MCF 10A (cell line): ENCODE measurements at regions of chr3 and their contacts with region 1.

Region 1: DNA sequence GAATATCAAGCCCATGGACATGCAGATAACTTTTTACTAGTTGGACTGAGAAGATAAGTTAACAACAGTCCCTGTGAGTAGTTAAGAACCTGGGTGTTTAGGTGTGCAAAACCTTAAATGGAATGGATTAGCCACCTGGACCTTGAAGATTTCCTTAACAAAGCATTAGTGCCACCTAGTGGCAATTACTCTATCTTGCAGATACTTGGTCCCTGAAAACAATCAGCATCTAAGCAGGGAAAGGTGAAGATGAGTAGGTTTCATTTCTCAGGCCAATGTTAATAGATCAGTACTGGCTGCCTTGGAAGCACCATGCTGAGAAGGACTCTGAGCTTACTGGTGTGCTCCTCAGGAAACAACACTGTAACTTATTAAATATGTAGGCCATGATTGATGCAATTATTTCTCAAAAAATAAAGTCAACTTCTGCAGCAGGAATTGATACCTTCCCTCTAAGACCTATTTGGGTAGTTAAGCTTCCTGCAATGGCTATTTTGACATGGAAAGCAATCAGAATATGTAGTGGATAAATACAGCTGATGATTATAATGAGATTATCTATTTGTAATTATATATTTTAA is 329.4 kb downstream of the TBC1D5 start:
- DNase-seq: peak; percentile 66
- H3K4me3 Mint-ChIP-seq: no peak overlapping the region
- H3K27ac Mint-ChIP-seq: no peak overlapping the region
- H3K4me1 Mint-ChIP-seq: no peaks in the 10 kb centered on the region
- H3K27me3 Mint-ChIP-seq: no peaks in the 10 kb centered on the region
- CTCF ChIP-seq: peak; percentile 67

Region 2: DNA sequence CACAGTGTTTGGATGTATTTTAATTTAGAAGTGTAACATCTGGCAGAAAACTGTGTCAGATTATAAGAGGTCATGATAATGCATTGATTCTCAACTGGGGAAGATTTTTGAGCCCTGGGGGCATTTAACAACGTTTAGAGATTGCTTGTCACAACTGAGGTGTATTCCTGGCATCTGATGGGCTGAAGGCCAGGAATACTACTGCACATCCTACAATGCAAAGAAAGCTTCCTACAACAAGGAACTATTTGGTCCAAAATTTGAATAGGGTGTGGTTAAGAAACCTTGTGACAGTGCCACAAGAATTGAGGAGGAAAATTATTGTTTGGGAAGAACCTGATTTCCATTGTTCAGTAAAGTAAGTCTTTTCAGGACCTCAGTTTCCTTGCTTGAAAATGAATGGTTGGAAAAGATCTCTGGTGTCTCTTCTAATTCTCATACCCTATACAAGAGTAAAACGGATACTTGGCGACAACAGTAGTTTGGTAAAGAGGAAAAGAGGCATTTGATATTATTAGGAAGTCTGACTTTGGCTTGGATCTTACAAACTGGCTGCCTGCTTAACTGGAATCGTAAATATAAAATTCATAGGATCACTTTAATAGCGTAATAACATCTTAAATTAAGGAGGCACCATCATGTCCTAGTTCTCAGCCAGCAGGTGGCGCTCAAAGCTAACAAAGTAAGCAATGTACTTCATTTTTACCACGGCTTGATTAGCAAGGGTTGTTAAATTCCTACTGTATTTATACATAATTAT is 812.1 kb before region 1 on chr3:
- CTCF ChIA-PET with region 1: interaction called, 10 read pairs
- POLR2A ChIA-PET with region 1: no interaction called
- intact Hi-C with region 1: loop called (anchors 2 kb)
- DNase-seq: peak; percentile 80
- H3K4me3 Mint-ChIP-seq: no peak overlapping the region
- H3K27ac Mint-ChIP-seq: no peak overlapping the region
- H3K4me1 Mint-ChIP-seq: no peaks in the 10 kb centered on the region
- H3K27me3 Mint-ChIP-seq: peaks cover 54% of the 10 kb centered on the region
- CTCF ChIP-seq: peak; percentile 69

Region 3: DNA sequence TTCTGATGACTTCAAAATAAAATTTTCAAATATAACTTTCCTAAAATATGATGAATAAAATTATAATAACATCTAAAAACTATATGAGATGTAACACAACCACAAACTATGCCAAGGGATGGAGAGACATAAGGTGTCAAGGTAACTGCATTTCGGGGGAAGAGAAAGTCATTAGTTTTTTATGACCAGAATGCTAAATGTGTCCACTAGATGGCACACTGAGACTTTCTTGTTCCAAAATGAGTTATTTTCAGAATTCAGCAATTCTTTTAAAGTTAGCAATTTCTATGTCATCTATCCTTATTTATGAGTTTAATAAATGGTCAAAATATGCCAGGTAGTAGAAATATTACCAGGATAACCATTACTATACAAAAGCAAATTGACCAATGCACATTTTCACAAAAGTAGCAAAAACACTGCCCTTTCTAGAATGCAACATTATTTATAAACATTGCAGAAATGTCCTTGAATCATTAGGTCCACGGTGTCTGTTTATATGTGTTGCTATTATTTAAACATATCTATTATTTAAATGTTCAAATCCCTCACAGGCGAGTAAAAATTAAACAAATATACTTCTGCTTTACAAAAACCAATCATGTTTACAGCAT is 154.1 kb before region 1 on chr3:
- CTCF ChIA-PET with region 1: interaction called, 13 read pairs
- POLR2A ChIA-PET with region 1: no interaction called
- intact Hi-C with region 1: loop called (anchors 1 kb)
- DNase-seq: peak; percentile 55
- H3K4me3 Mint-ChIP-seq: no peak overlapping the region
- H3K27ac Mint-ChIP-seq: no peak overlapping the region
- H3K4me1 Mint-ChIP-seq: no peaks in the 10 kb centered on the region
- H3K27me3 Mint-ChIP-seq: no peaks in the 10 kb centered on the region
- CTCF ChIP-seq: peak; percentile 51

Region 4: DNA sequence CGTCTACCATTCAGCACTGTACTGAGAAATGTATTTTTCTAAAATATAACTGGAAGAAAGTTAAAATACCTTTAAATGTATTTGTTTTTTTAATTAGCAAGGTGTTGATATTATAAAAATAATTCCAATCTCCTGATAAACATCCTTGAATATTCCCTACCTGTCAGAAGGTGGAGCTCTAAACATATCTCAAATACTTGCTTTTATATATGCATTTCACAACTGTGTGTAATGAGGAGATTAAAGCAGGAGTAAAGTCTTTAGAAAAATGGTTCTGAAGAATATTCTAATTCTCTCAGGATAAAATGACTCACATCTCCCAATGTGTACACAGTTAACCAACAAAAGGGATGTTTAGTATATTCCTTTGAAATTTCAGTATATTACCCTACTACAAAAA is 105.6 kb before region 1 on chr3:
- CTCF ChIA-PET with region 1: interaction called, 5 read pairs
- POLR2A ChIA-PET with region 1: interaction called, 3 read pairs
- intact Hi-C with region 1: loop called (anchors 2 kb)
- DNase-seq: peak; percentile 9
- H3K4me3 Mint-ChIP-seq: no peak overlapping the region
- H3K27ac Mint-ChIP-seq: no peak overlapping the region
- H3K4me1 Mint-ChIP-seq: no peaks in the 10 kb centered on the region
- H3K27me3 Mint-ChIP-seq: no peaks in the 10 kb centered on the region
- CTCF ChIP-seq: no peak

Region 5: DNA sequence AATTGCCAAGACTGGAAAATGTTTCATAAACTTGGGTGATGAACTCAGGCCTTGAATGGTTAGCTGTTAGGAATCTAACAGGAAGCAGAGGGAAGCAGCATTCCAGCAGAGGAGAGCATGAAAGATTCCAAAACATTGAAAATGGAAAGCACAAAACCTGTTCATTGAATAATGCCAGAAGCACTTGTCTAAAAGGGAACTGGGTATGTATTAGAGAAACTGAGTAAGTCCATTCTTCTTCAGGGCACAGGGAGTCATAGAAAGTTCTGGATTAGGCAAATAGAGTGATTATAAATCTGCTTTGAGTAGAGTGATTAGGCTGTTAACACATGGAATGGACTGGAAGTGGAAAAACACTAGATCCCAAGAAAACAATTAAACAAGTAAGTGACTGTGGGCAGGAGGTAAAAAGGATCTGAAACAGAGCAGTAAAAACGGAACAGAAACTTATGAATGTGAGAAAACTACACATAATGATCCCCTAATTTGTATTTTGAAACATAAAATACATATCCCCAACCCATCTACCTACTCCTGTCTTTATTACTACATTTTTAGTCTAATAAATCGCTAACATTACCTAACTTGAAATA is 14.0 kb before region 1 on chr3:
- CTCF ChIA-PET with region 1: interaction called, 13 read pairs
- POLR2A ChIA-PET with region 1: interaction called, 5 read pairs
- intact Hi-C with region 1: no loop called
- DNase-seq: no peak
- H3K4me3 Mint-ChIP-seq: no peak overlapping the region
- H3K27ac Mint-ChIP-seq: no peak overlapping the region
- H3K4me1 Mint-ChIP-seq: no peaks in the 10 kb centered on the region
- H3K27me3 Mint-ChIP-seq: no peaks in the 10 kb centered on the region
- CTCF ChIP-seq: no peak

Region 6: DNA sequence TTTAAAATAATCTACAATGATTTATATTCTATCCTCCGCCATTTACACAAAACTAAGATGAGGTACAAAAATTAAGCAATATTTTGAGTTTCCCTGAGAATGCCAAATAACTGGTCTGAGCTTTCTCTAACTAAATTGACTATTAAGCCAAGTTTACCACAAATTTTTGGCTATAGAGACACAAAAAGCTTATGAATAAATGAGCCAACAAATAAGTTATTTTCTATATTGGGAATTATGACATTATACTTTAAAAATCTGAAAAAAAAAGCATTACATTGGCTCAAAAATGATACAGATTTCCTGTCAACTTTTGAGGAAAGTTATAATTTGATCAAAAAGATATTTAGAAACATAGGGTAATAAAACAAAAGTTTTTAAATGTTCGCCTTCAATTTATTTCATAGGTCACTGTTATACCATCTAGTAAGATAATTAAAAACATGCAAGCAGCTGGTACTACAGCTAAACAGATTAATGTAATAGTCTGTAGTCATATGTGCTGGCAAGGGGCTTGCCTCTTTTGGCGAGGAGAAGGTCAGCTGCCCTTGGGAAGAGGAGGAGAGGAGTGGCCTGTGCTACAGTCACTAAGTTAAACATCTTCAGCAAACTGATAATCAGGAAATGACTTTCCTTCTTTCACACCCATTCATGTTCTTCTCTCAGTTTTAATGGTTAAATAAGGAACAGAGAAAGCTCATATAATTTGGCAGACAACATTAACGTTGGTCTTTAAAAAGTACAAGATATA is 10.9 kb after region 1 on chr3:
- CTCF ChIA-PET with region 1: interaction called, 28 read pairs
- POLR2A ChIA-PET with region 1: no interaction called
- intact Hi-C with region 1: no loop called
- DNase-seq: no peak
- H3K4me3 Mint-ChIP-seq: no peak overlapping the region
- H3K27ac Mint-ChIP-seq: no peak overlapping the region
- H3K4me1 Mint-ChIP-seq: no peaks in the 10 kb centered on the region
- H3K27me3 Mint-ChIP-seq: no peaks in the 10 kb centered on the region
- CTCF ChIP-seq: no peak

Region 7: DNA sequence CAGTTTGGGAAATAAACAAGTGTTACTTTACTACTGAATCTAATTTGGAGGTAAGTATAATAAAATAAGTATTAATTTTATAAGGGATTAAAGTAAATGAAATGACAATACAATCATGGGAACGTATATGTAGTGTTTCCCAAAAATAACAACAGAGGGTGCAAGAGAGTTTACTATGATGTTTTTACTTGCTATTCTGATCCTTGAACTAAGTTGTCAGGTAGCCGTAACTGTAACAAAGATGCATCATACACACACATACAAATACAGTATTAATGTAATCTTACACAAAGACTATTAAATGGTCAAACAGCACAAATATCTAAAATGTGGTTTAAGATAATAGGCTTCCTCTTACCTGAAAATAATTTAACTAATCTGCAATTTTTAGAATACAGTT is 18.0 kb after region 1 on chr3:
- CTCF ChIA-PET with region 1: interaction called, 19 read pairs
- POLR2A ChIA-PET with region 1: no interaction called
- intact Hi-C with region 1: no loop called
- DNase-seq: peak; percentile 54
- H3K4me3 Mint-ChIP-seq: no peak overlapping the region
- H3K27ac Mint-ChIP-seq: no peak overlapping the region
- H3K4me1 Mint-ChIP-seq: peaks cover 4% of the 10 kb centered on the region
- H3K27me3 Mint-ChIP-seq: no peaks in the 10 kb centered on the region
- CTCF ChIP-seq: peak; percentile 42